AG04449 (cell line): ENCODE measurements at regions of chr11 and their contacts with region 1.

Region 1: GRCh38 chr11:79100093-79100910 is 340.5 kb downstream of the TENM4 start:
- DNase-seq: no peak
- H3K4me3 ChIP-seq: no peak overlapping the region
- CTCF ChIP-seq: peak; percentile 84

Region 2: DNA sequence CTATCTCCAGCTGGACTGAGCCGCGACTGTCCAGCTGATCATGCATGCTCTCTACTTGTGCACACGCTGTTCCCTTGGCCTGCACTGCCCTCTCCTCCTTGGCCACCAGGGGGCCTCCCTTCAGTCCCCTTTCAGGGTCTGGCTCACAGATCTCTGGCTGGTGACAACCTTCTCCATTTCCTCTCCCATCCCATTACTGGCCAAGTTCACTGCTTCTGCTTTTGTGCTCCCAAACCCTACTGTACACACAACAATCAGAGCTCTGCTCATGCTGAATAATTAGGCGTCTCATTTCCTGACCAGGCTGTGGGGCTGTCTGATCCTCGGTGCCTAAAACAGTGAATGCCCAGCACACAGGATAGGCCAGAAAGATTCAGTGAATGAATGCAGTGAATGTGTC is 301.6 kb before region 1 on chr11:
- CTCF ChIA-PET with region 1: interaction called, 31 read pairs
- POLR2A ChIA-PET with region 1: no interaction called
- DNase-seq: no peak
- H3K4me3 ChIP-seq: no peak overlapping the region
- CTCF ChIP-seq: peak; percentile 93

Region 3: DNA sequence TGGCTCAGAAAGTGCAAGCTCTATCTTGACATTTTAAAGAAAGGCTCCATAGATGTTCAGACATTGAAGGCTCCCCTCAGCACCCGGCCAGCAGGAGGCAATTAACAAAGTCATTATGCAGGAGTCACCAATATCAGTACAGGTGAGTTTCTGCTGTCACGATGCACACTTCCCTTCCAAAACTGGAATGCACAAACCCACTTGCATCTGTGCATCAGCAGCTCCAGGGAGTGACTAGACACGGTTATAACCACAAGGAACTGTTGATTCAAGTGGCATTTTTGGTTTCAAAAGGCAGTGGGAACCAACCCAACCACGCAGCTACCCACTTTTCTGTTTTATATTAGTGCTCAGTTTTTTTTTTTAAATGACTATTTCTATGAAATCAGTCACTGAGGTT is 231.7 kb before region 1 on chr11:
- CTCF ChIA-PET with region 1: no interaction called
- POLR2A ChIA-PET with region 1: no interaction called
- DNase-seq: no peak
- H3K4me3 ChIP-seq: no peak overlapping the region
- CTCF ChIP-seq: no peak

Region 4: DNA sequence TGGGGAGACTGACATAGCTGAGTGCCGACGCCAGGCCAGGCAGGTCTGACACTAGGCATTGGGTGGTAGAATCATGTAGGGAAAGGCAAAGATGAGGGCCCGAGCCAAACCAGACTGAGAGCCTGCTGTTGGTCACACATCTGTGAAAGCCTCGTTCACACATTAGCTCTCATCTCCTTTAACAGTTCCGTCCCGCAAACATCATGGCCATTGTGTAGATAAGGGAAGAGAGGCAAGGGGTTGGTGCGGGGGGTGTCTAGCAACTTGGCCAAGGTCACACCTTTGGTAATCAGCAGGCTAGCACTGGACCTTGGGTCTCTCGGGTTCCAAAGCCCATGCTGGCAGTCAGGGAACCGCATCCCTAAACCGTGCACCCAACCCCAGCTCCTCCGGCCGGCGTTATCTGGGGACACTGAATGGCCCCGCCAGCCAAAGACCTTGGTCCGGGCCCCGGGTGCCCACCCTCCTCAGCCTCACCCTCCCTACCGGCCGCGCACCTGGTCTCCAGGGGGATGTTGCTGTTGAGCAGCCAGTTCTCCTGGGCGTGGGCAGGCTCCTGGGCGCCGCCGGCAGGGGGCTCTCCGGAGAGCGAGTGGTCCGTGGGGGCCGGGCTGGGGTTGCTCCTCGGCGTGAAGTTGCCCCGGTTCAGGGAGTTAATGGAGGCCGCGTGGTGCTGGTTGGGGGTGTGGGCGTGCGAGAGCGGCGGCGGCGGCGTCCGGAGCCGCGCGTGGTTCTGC is 197.4 kb before region 1 on chr11:
- CTCF ChIA-PET with region 1: no interaction called
- POLR2A ChIA-PET with region 1: no interaction called
- DNase-seq: no peak
- H3K4me3 ChIP-seq: no peak overlapping the region
- CTCF ChIP-seq: no peak

Region 5: GRCh38 chr11:79062814-79063762 is 37.2 kb before region 1 on chr11:
- CTCF ChIA-PET with region 1: interaction called, 15 read pairs
- POLR2A ChIA-PET with region 1: no interaction called
- DNase-seq: no peak
- H3K4me3 ChIP-seq: no peak overlapping the region
- CTCF ChIP-seq: peak; percentile 60

Region 6: DNA sequence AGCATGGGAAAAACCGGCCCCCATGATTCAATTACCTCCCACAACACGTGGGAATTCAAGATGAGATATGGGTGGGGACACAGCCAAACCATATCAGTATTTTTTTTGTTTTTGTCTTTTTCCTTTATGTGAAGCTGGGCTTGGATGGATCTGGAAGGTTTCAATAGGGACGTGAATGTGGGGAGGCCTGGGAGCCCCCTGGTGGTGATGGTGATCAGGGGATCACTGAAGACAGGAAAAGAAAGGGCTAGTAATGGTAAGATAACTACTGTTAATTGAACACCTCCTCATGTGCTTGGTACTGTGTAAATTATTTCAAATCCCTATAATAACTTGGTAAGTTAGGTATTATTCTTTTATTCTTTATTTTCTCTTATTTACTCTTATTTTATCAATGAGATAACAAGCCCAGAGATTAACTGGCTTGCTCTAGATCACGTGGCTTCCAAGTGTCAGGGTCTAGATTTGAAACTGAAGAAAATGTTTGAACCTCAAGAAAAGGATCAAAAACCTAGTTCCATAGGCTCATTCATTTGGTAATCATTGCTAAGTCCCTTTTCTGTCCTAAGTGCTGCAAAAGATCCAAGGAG is 23.7 kb before region 1 on chr11:
- CTCF ChIA-PET with region 1: interaction called, 12 read pairs
- POLR2A ChIA-PET with region 1: no interaction called
- DNase-seq: no peak
- H3K4me3 ChIP-seq: no peak overlapping the region
- CTCF ChIP-seq: peak; percentile 52

Region 7: DNA sequence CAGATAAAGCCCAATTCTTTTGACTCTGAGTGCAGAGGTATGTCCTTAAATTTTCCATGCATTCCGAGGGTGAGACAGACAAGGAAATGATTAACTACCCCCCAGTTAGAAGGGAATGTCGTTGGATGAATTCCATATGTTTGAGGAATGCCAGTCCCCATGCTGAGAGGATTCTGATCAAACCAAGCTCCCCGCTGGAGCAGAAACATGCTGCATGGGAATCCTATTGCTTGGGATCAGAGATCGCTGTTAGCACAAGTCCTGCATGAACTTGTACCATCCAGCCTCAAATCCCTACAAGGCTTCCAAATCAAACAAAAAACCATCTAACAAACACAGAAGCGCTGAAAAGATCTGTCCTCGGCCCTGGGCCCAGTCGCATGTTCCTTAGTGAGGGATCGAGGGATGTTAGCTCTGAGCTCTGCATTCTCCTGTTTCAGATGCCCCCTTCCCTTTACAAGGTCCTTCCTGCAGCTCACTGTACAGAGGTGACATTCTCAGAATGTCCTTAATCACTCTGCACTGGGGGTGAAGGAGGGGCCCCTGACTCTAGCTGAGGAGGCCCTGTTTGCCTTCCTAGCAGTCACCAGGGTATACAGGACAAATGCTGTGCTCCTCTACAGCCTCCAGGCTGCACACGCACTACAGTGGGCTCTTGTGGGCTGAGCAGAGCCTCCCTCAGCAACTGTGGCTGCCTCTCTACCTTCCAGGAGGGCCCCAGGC is 12.9 kb before region 1 on chr11:
- CTCF ChIA-PET with region 1: interaction called, 78 read pairs
- POLR2A ChIA-PET with region 1: interaction called, 5 read pairs
- DNase-seq: peak; percentile 65
- H3K4me3 ChIP-seq: no peak overlapping the region
- CTCF ChIP-seq: no peak

Region 8: GRCh38 chr11:79113054-79113690 is 12.9 kb after region 1 on chr11:
- CTCF ChIA-PET with region 1: interaction called, 61 read pairs
- POLR2A ChIA-PET with region 1: no interaction called
- DNase-seq: no peak
- H3K4me3 ChIP-seq: no peak overlapping the region
- CTCF ChIP-seq: no peak

Region 9: DNA sequence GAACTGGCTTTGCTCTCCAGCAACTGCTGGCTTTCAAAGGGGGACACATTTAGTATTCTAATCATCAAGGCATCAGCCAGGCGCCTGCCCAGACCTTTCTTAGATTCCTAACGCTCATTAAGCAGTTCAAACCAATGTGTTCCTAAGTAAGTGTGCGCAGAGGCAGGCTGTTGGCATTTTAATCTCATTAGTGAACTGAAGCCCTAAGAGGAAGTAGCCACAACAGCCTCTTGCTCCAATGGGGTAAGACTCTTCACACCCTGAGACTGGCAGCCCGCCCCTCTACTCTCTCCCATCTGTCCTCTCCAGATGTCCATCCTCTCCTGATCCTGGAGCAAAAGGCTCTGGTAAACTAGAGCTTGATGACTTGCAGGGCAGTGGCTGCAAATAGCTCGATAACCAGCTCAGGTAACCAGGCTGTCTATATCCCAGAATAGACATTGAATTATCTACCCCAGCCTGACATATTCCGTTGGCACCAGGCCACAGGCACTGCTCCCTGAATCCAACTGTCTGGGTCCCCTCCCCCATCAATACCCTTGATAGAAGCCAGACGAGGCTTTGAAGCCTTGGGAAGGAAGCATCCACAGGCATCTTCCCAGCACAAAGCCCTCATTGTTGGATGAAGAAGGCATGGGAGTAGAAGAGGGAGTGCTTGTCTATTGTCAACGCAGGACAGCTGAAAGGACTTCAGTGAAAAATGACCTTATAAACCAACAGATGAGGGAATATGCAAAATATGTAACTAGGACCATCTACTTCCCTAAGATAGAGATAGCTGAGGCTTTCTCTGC is 19.4 kb after region 1 on chr11:
- CTCF ChIA-PET with region 1: interaction called, 13 read pairs
- POLR2A ChIA-PET with region 1: no interaction called
- DNase-seq: no peak
- H3K4me3 ChIP-seq: no peak overlapping the region
- CTCF ChIP-seq: no peak

Region 10: GRCh38 chr11:79294845-79295731 is 194.8 kb after region 1 on chr11:
- CTCF ChIA-PET with region 1: no interaction called
- POLR2A ChIA-PET with region 1: no interaction called
- DNase-seq: no peak
- H3K4me3 ChIP-seq: no peak overlapping the region
- CTCF ChIP-seq: no peak